ENCODE measurements at regions of chr3 and their contacts with region 1.

Region 1: DNA sequence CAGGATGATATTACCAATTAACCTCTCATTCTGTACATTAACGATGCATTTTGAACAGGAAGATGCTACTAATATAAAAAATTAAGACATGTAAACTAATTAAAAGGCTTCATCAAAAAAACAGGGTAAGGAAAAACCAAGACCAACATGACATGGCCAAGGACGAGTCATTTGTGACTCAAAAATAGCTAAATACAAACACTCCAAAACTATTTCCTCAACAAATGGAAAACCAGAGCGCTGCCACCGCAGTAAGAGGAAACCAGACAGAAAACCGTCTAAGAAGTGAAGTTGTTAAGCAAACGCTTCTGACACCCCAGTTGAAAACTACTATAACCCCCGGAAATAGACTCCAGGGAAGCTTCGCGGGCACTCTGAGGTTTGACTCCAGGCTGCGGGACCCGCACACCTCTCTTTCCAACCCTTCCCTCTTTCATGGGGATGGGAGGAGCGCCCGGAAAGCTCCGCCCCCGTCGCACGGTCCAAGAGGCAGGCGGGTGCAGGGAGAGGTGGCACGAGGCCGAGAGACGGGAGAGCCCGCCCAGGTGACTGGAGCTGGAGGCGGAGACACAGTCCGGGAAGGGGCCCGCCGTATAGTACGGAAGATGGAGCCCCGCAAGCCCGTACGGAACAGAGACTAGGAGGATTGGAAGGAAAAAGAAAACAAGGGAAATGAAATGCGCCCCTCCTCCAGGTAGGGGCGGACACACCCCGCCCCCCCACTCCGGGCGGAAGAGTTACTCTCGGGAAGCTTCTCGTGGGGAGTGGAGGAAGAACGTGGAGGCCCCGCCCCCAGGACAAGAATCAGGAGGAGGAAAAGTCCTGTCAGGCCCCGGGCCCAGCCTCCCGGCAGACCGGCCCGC is 708 bp downstream of the DCAF1 start:
- DNase-seq: peak; percentile 94
- H3K4me3 ChIP-seq: peak overlapping the region; percentile 68 to 95 (median 80)
- H3K27ac ChIP-seq: peak overlapping the region; percentile 67
- H3K4me1 ChIP-seq: peaks cover 4% of the 10 kb centered on the region
- H3K27me3 ChIP-seq: no peaks in the 10 kb centered on the region
- CTCF ChIP-seq: no peak

Region 2: GRCh38 chr3:51391075-51391567 is 108.0 kb before region 1 on chr3 and contains the start of gene RBM15B:
- CTCF ChIA-PET with region 1: no interaction called
- dilution Hi-C with region 1: no loop called
- in situ Hi-C with region 1: no loop called
- intact Hi-C with region 1: loop called (anchors 1 kb)
- DNase-seq: peak; percentile 96
- H3K4me3 ChIP-seq: peak within 1 kb of the TSS; percentile 55 to 71 (median 59)
- H3K27ac ChIP-seq: peak within 1 kb of the TSS; percentile 33
- H3K4me1 ChIP-seq: peaks cover 54% of the 10 kb centered on the region
- H3K27me3 ChIP-seq: no peaks in the 10 kb centered on the region
- CTCF ChIP-seq: peak; percentile 62 to 92
- total RNA-seq, gene RBM15B: 33.3 to 40.8 TPM

Region 3: DNA sequence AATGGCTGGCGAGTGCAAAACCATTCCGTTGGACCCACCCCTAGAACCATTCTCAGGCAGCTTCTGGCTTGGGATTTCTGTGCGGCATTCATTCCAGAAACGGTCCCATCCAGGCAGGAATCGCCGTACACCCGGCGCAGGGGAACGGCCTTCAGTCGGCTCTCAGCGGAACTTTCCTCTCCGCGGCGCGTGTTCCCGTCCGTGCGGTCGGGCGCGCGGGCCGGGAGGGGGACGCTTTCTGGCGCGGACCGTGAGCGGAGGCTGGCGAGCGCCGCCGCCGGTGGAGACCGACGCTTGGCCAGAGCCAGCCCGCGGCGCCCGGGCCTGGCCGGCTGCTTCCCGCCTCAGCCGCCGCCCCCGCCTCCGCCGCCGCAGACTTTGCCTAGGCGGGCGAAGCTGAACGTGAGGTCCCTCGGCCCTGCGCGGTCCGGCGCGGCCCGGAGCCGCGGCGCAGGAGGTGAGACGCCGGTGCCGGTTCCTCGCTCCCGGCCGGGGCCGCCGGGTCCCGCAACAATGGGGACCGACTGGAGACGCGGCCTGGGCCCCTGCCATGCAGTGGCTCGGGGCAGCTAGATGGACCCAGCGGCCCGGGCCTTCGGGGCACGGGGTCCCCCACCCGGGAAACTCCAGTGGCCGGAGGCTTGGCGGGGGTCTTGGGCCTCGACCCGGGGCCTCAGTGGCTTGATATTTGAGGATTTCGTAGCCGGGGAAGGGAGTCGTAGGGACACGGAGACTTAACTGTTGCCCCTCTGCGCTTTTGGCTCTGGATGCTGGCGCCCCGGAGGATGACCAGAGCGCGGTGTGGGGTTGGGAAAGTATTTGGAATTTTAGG is 39.6 kb after region 1 on chr3 and contains the start of gene RAD54L2:
- CTCF ChIA-PET with region 1: interaction called, 3 read pairs
- dilution Hi-C with region 1: loop called (anchors 5 kb)
- in situ Hi-C with region 1: loop called in 1 of 2 experiments (anchors 5 kb)
- intact Hi-C with region 1: loop called (anchors 1 kb)
- DNase-seq: peak; percentile 86
- H3K4me3 ChIP-seq: peak within 1 kb of the TSS; percentile 71 to 82 (median 80)
- H3K27ac ChIP-seq: peak within 1 kb of the TSS; percentile 82
- H3K4me1 ChIP-seq: peaks cover 11% of the 10 kb centered on the region
- H3K27me3 ChIP-seq: no peaks in the 10 kb centered on the region
- CTCF ChIP-seq: peak in 1 of 2 donors; percentile 31
- total RNA-seq, gene RAD54L2: 26.9 to 33.2 TPM

Region 4: DNA sequence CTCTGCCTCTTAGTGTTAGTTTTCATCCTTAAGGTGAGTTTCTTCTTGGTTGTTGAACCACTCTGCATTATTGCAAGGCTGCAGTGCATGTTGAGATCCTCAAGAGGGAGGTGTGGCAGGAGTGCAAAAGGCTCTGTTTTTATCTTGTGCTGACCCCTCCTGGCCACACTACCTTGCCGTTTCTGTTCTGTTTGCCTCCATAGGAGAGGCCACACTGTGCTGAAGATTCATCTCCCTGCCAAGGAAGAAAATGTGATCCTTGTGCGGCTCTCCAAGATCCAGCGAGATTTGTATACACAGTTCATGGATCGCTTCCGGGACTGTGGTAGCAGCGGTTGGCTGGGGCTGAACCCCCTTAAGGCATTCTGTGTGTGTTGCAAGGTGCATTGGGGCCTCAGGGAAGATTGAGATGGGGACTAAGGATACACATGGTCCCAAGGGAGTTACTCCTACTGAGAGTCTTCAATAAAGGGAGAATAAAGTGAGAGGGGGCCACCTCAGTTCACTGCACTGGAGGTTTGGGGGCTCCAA is 138.9 kb after region 1 on chr3:
- CTCF ChIA-PET with region 1: interaction called, 4 read pairs
- dilution Hi-C with region 1: no loop called
- in situ Hi-C with region 1: loop called (anchors 10 to 25 kb)
- intact Hi-C with region 1: loop called (anchors 1 kb)
- DNase-seq: peak; percentile 53
- H3K4me3 ChIP-seq: no peak overlapping the region
- H3K27ac ChIP-seq: no peak overlapping the region
- H3K4me1 ChIP-seq: peaks cover 4% of the 10 kb centered on the region
- H3K27me3 ChIP-seq: no peaks in the 10 kb centered on the region
- CTCF ChIP-seq: peak; percentile 90 to 95

Region 5: GRCh38 chr3:51682079-51682478 is 183.0 kb after region 1 on chr3:
- CTCF ChIA-PET with region 1: interaction called, 25 read pairs
- dilution Hi-C with region 1: no loop called
- in situ Hi-C with region 1: loop called (anchors 5 kb)
- intact Hi-C with region 1: loop called (anchors 1 kb)
- DNase-seq: peak; percentile 84
- H3K4me3 ChIP-seq: no peak overlapping the region
- H3K27ac ChIP-seq: peak overlapping the region; percentile 4
- H3K4me1 ChIP-seq: peaks cover 64% of the 10 kb centered on the region
- H3K27me3 ChIP-seq: no peaks in the 10 kb centered on the region
- CTCF ChIP-seq: peak; percentile 92 to 98